ENCODE measurements at regions of chr7 and their contacts with region 1.

Region 1: GRCh38 chr7:29921404-29922010 is 68.1 kb downstream of the SCRN1 start:
- DNase-seq: peak; percentile 48
- H3K4me3 Mint-ChIP-seq: no peak overlapping the region
- H3K27ac Mint-ChIP-seq: no peak overlapping the region
- H3K4me1 Mint-ChIP-seq: no peaks in the 10 kb centered on the region
- H3K27me3 Mint-ChIP-seq: no peaks in the 10 kb centered on the region

Region 2: DNA sequence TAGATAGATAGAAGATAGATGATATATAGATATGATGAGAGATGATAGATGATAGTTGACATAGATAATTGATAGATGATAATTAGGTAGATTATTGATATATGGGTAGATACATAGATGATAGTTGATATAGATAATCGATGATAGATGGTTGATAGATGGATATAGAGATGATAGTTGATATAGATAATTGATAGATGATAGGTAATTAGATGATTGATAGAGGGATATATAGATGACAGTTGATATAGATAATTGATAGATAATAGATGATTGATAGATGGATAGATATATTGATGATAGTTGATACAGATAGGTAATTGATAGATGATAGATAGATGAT is 285.5 kb before region 1 on chr7:
- CTCF ChIA-PET with region 1: interaction called, 13 read pairs
- DNase-seq: no peak
- H3K4me3 Mint-ChIP-seq: no peak overlapping the region
- H3K27ac Mint-ChIP-seq: no peak overlapping the region
- H3K4me1 Mint-ChIP-seq: no peaks in the 10 kb centered on the region
- H3K27me3 Mint-ChIP-seq: no peaks in the 10 kb centered on the region

Region 3: GRCh38 chr7:29935111-29935510 is 13.6 kb after region 1 on chr7:
- CTCF ChIA-PET with region 1: interaction called, 15 read pairs
- DNase-seq: no peak
- H3K4me3 Mint-ChIP-seq: no peak overlapping the region
- H3K27ac Mint-ChIP-seq: no peak overlapping the region
- H3K4me1 Mint-ChIP-seq: no peaks in the 10 kb centered on the region
- H3K27me3 Mint-ChIP-seq: no peaks in the 10 kb centered on the region

Measured in activated naive CD4-positive, alpha-beta T cell treated with anti-CD3 and anti-CD28 coated beads, Interleukin-2, amount 10 ng/mL, durations not matched to agents 7 days and 5 days (primary cell).